ENCODE measurements at regions of chr12 and their contacts with region 1.

Region 1: GRCh38 chr12:77314378-77315052 is 249.1 kb upstream of the E2F7 start:
- DNase-seq: no peak
- ATAC-seq: no peak
- H3K4me3 ChIP-seq: no peak overlapping the region
- H3K27ac ChIP-seq: no peak overlapping the region
- H3K4me1 ChIP-seq: no peaks in the 10 kb centered on the region
- CTCF ChIP-seq: no peak
- EP300 ChIP-seq: no peak
- POLR2A ChIP-seq: no peak
- RAD21 ChIP-seq: no peak

Region 2: DNA sequence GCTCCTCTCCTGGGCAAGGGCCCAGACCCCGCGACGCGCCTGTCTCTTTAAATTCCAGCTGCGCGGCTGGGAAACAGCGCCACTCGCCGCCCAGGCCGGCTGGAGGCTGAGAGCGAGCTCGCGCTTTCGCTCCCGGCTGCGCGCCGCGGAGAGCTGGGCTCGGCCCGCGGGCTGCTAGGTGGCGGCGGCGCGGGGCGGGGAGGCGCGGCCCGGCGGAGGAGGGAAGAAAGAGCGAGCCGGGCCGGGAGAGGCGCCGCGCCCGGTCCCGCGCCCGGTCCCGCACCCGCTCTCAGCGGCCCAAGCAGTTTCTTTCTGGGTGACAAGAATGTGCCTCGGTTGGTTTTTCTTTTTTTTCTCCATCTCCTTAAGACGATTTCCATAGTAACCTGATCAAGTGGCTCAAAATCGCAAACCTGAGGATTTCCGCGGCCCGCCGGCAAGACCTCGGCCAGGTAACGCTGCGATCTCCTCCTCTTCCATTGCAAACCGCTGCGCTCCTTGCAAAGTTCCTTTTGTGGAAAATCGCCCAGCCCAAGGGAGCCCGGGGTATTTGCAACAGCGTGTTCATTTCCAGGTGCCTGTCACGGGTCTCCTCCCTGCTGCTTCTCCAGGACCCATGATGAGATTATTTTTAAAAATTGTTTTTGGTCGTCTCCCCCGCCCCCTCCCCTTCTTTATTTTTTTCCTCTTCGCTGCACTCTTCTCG is 10.4 kb after region 1 on chr12:
- CTCF ChIA-PET with region 1: interaction called, 12 read pairs
- POLR2A ChIA-PET with region 1: no interaction called
- DNase-seq: peak; percentile 67 to 68
- ATAC-seq: peak; percentile 93 to 99
- H3K4me3 ChIP-seq: peak overlapping the region; percentile 53
- H3K27ac ChIP-seq: peak overlapping the region in 1 of 2 experiments; percentile 57; a peak in 2 of 6 replicates
- H3K4me1 ChIP-seq: peaks cover 6% of the 10 kb centered on the region; the same call in 1 of the 3 replicates
- CTCF ChIP-seq: peak; percentile 68
- EP300 ChIP-seq: no peak
- POLR2A ChIP-seq: no peak
- RAD21 ChIP-seq: peak; percentile 21 to 63; a peak in 4 of 5 replicates

Measured in A549 (cell line).